OCI-LY7 (cell line): ENCODE measurements at regions of chr14 and their contacts with region 1.

Region 1: DNA sequence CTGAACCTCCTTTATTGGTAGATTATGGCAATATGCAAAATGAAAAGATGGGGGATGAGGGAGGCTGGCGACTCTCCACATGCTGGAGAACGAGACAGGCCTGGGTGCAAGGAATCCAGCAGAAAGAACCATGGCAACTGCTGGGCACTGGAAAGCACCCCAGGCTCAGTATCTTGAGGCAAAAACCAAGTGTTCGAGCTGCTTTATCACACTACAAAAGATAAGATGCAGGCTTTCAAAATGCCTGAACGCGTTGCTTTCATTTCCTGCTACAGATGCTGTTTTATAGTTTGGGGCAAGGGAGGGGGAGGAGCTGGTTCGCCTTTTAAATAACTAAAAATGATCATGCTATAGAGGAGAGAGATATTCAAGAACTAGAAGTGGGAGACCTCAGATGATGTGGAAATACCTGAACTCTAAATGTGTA is 38.9 kb downstream of the NIN start:
- DNase-seq: peak; percentile 71
- H3K4me3 ChIP-seq: peak overlapping the region; percentile 61
- H3K27ac ChIP-seq: peak overlapping the region; percentile 97
- H3K4me1 ChIP-seq: peaks cover 100% of the 10 kb centered on the region
- CTCF ChIP-seq: no peak

Region 2: GRCh38 chr14:50475462-50475861 is 316.6 kb before region 1 on chr14:
- CTCF ChIA-PET with region 1: no interaction called
- POLR2A ChIA-PET with region 1: no interaction called
- intact Hi-C with region 1: no loop called
- DNase-seq: no peak
- H3K4me3 ChIP-seq: no peak overlapping the region
- H3K27ac ChIP-seq: no peak overlapping the region
- H3K4me1 ChIP-seq: no peaks in the 10 kb centered on the region
- CTCF ChIP-seq: no peak

Region 3: GRCh38 chr14:50532502-50533240 is 259.4 kb before region 1 on chr14 and contains the start of gene MAP4K5:
- CTCF ChIA-PET with region 1: no interaction called
- POLR2A ChIA-PET with region 1: no interaction called
- intact Hi-C with region 1: no loop called
- DNase-seq: peak; percentile 93
- H3K4me3 ChIP-seq: peak within 1 kb of the TSS; percentile 89
- H3K27ac ChIP-seq: peak within 1 kb of the TSS; percentile 71
- H3K4me1 ChIP-seq: peaks cover 27% of the 10 kb centered on the region
- CTCF ChIP-seq: peak; percentile 85
- total RNA-seq, gene MAP4K5: 44.0 and 49.8 TPM in 2 replicates

Region 4: DNA sequence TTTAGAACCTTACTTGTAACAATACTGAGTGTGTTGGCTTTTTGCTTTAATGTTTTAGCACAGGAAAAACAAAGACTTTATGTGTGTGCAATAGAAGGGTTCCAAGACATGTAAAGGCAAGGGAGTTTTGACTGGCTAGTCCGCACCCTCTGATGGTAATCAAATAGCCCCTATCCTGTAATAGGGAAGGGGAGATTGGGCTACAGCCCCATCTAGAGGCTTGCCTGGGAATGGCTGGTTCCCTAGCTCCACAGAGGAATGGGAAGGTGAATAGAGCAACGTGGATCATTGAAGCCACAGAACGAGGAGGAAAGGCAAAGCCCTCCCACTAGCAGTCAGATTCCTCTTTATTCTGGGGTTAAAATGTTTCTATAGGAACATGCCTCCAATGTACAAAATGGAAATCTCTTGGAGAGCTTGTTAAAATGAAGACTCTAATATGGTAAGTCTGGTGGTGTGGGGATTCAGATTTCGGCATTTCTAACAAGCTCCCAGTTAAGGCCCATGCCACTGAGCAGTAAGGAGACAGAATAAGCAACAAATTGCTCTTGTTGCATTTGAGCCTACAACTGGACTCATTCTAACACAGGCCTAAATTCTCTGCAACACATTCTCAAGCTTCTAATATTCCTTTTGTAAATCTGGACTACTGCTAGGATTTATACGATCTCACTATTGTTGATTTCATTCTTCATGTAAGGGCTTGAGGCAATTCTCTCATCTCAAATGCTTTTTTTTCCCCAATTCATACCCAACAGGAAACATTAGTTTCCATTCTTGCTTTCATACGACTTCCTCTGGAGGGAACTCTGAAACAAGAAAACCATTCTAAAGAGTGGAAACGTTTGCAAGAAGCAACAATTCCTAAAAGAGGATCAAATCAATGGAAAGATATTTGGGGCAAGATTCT is 18.2 kb before region 1 on chr14:
- CTCF ChIA-PET with region 1: no interaction called
- POLR2A ChIA-PET with region 1: interaction called, 44 read pairs
- intact Hi-C with region 1: no loop called
- DNase-seq: peak; percentile 30
- H3K4me3 ChIP-seq: no peak overlapping the region
- H3K27ac ChIP-seq: no peak overlapping the region
- H3K4me1 ChIP-seq: peaks cover 14% of the 10 kb centered on the region
- CTCF ChIP-seq: peak; percentile 82

Region 5: DNA sequence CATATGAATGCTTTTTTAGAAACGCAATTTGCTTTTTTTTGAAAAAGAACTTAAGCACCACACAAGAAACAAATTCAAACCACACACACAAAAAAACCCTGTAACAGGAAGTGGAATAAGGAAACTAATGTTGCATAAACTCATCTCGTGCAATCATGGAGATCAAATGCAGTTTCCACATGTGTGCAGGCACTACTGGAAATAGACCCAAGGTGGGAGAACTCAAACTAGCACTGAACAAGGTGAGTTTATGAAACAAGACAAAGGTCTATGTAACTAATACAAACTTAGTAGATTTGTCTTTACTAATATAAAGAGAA is 21.4 kb after region 1 on chr14:
- CTCF ChIA-PET with region 1: no interaction called
- POLR2A ChIA-PET with region 1: interaction called, 156 read pairs
- intact Hi-C with region 1: loop called (anchors 2 kb)
- DNase-seq: peak; percentile 70
- H3K4me3 ChIP-seq: peak overlapping the region; percentile 50
- H3K27ac ChIP-seq: peak overlapping the region; percentile 74
- H3K4me1 ChIP-seq: peaks cover 37% of the 10 kb centered on the region
- CTCF ChIP-seq: no peak

Region 6: DNA sequence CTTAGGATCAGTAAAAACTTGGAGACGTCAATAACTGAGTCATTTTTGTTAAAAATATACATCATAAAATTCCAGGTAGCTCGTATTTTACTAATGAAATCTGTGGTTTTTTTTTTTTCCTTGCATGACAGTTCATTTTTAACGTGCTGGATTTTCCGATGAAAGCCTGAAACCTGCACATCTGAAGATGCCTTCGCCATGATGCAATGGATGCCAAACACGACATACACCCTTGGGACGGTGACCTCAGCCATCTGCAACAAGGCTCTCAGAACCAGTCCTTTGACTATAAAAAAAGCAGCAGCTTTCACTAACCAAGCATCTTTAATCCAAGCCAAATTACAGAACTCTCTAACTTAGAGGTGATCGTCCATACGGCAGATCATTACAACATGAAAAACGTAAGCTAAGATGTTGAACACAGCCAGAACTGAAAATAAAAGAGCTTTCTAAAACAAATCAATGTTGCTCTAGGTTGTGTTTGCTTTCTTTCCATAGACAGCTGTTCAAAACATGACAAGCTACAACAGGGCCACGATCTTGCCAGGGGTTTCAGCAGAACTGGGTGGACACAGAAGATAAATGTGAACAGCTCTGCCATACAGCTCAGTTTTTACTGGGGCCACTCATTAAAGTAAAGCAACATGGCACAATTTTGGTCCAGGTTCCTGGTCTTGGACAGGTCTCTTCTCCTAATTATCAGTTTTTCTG is 31.1 kb after region 1 on chr14:
- CTCF ChIA-PET with region 1: interaction called, 24 read pairs
- POLR2A ChIA-PET with region 1: interaction called, 404 read pairs
- intact Hi-C with region 1: no loop called
- DNase-seq: peak; percentile 71
- H3K4me3 ChIP-seq: peak overlapping the region; percentile 62
- H3K27ac ChIP-seq: peak overlapping the region; percentile 80
- H3K4me1 ChIP-seq: peaks cover 77% of the 10 kb centered on the region
- CTCF ChIP-seq: no peak

Region 7: GRCh38 chr14:50846226-50846880 is 54.3 kb after region 1 on chr14:
- CTCF ChIA-PET with region 1: no interaction called
- POLR2A ChIA-PET with region 1: interaction called, 11 read pairs
- intact Hi-C with region 1: no loop called
- DNase-seq: no peak
- H3K4me3 ChIP-seq: no peak overlapping the region
- H3K27ac ChIP-seq: no peak overlapping the region
- H3K4me1 ChIP-seq: no peaks in the 10 kb centered on the region
- CTCF ChIP-seq: no peak

Region 8: GRCh38 chr14:50855558-50855957 is 63.5 kb after region 1 on chr14:
- CTCF ChIA-PET with region 1: interaction called, 32 read pairs
- POLR2A ChIA-PET with region 1: interaction called, 78 read pairs
- intact Hi-C with region 1: loop called (anchors 1 kb)
- DNase-seq: no peak
- H3K4me3 ChIP-seq: no peak overlapping the region
- H3K27ac ChIP-seq: no peak overlapping the region
- H3K4me1 ChIP-seq: peaks cover 21% of the 10 kb centered on the region
- CTCF ChIP-seq: no peak

Region 9: GRCh38 chr14:50875359-50876070 is 83.5 kb after region 1 on chr14:
- CTCF ChIA-PET with region 1: no interaction called
- POLR2A ChIA-PET with region 1: interaction called, 10 read pairs
- intact Hi-C with region 1: no loop called
- DNase-seq: peak; percentile 96
- H3K4me3 ChIP-seq: peak overlapping the region; percentile 63
- H3K27ac ChIP-seq: peak overlapping the region; percentile 95
- H3K4me1 ChIP-seq: peaks cover 66% of the 10 kb centered on the region
- CTCF ChIP-seq: no peak